Mammary epithelial cell (primary cell): ENCODE measurements at regions of chr5 and their contacts with region 1.

Region 1: GRCh38 chr5:134511788-134512650 is 13.5 kb upstream of the JADE2 start:
- DNase-seq: peak; percentile 35
- H3K4me3 ChIP-seq: no peak overlapping the region
- H3K27ac ChIP-seq: peak overlapping the region; percentile 80
- H3K4me1 ChIP-seq: peaks cover 44% of the 10 kb centered on the region
- H3K27me3 ChIP-seq: no peaks in the 10 kb centered on the region
- CTCF ChIP-seq: peak; percentile 25 to 70

Region 2: DNA sequence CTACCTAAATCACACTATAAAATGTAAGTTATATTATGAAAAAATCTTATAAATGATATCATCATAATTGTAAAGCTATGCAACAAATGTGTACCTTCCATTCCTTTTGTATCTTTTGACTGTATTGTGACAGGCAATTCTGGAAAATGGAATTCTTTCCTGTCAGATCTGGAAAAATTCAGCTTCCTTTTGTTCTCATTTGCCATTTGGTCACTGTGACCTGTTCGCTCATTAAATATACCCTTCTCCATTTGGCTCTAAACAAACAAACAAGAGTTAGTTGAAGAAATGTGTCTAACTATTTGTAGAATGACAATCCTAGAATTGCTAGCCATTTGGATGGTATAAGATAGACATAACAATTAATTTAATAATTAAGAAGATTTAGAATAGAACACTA is 207.7 kb before region 1 on chr5:
- CTCF ChIA-PET with region 1: no interaction called
- dilution Hi-C with region 1: no loop called
- in situ Hi-C with region 1: no loop called
- intact Hi-C with region 1: loop called (anchors 5 kb)
- DNase-seq: no peak
- H3K4me3 ChIP-seq: no peak overlapping the region
- H3K27ac ChIP-seq: no peak overlapping the region
- H3K4me1 ChIP-seq: no peaks in the 10 kb centered on the region
- H3K27me3 ChIP-seq: no peaks in the 10 kb centered on the region
- CTCF ChIP-seq: no peak

Region 3: GRCh38 chr5:134406390-134406789 is 105.6 kb before region 1 on chr5:
- CTCF ChIA-PET with region 1: no interaction called
- dilution Hi-C with region 1: loop called (anchors 5 kb)
- in situ Hi-C with region 1: no loop called
- intact Hi-C with region 1: no loop called
- DNase-seq: no peak
- H3K4me3 ChIP-seq: no peak overlapping the region
- H3K27ac ChIP-seq: no peak overlapping the region
- H3K4me1 ChIP-seq: peaks cover 14% of the 10 kb centered on the region
- H3K27me3 ChIP-seq: no peaks in the 10 kb centered on the region
- CTCF ChIP-seq: no peak

Region 4: DNA sequence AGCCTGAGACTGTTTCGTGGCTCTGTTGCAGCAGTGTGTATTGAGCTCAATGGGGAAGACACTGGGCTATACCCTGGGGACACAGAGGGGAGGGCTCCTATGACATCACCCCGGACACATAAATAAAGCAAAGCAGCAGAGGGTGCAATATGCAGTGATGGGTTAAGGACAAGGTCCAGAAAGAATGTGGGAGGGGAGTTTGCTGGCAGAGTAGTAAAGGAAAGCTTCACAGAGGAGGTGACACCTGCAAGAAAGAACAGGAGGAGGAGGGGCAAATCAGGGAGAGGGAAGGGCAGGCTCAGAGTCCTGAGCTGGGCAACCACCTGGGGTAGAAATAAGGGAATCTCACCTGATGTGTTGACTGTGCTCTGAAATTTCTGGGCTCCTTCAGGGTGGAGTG is 65.1 kb before region 1 on chr5:
- CTCF ChIA-PET with region 1: interaction called, 4 read pairs
- dilution Hi-C with region 1: loop called (anchors 5 kb)
- in situ Hi-C with region 1: loop called in 1 of 2 experiments (anchors 10 kb)
- intact Hi-C with region 1: no loop called
- DNase-seq: no peak
- H3K4me3 ChIP-seq: no peak overlapping the region
- H3K27ac ChIP-seq: no peak overlapping the region
- H3K4me1 ChIP-seq: peaks cover 11% of the 10 kb centered on the region
- H3K27me3 ChIP-seq: no peaks in the 10 kb centered on the region
- CTCF ChIP-seq: no peak

Region 5: DNA sequence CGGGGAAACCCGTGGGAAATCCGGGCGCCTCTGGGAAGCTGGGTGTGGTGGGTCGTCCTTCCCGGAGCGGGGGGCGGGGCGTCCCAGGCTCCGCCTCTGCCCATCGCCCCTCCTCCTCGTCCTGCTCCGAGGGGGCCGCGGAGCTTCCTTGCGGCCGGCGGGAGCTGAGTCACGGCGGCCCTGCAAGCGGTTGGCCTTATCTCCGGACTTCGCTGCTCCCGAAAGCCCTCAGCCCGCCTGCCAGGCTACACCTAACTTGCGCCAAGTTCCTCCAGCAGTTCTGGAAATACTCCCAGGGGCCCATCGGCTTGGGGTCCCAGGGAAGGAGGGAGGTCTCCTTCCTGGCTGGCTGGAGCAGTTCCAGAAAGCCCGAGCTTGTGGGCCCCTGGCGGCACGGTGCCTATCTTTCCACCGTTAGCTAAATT is 46.2 kb before region 1 on chr5:
- CTCF ChIA-PET with region 1: no interaction called
- dilution Hi-C with region 1: no loop called
- in situ Hi-C with region 1: no loop called
- intact Hi-C with region 1: loop called (anchors 2 kb)
- DNase-seq: peak; percentile 86
- H3K4me3 ChIP-seq: peak overlapping the region in 2 of 3 experiments; percentile 20 to 36
- H3K27ac ChIP-seq: peak overlapping the region; percentile 81
- H3K4me1 ChIP-seq: peaks cover 34% of the 10 kb centered on the region
- H3K27me3 ChIP-seq: no peaks in the 10 kb centered on the region
- CTCF ChIP-seq: no peak

Region 6: GRCh38 chr5:134586866-134587524 is 75.0 kb after region 1 on chr5:
- CTCF ChIA-PET with region 1: no interaction called
- dilution Hi-C with region 1: no loop called
- in situ Hi-C with region 1: no loop called
- intact Hi-C with region 1: no loop called
- DNase-seq: peak; percentile 73
- H3K4me3 ChIP-seq: no peak overlapping the region
- H3K27ac ChIP-seq: no peak overlapping the region
- H3K4me1 ChIP-seq: peaks cover 10% of the 10 kb centered on the region
- H3K27me3 ChIP-seq: no peaks in the 10 kb centered on the region
- CTCF ChIP-seq: peak; percentile 78 to 81